Heart right ventricle (tissue), 16 donors: ENCODE measurements at regions of chr18 and their contacts with region 1.

Region 1: DNA sequence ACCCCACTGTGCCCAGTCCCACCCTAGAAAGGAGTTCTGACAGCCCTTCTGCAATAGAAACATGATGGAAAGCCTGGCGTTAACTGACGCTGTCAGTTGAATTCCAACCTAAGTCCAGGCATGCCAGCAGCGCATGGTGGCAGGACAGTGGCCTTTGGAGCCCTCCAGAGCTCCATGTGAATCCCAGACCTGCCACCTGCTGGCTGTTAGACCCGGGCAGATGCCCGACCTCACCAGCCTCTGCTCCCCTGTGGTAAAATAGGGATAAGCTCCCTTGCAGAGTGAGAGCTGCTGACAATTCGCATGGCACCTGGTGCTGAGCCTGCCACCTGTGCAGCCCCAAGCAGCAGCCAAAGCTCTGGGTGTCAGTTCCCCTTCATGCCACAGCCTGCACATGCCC is 138.6 kb downstream of the LOXHD1 start:
- DNase-seq: peak; percentile 34 to 45
- ATAC-seq: peak; percentile 77 to 93 (median 86)
- H3K4me3 ChIP-seq: no peak overlapping the region
- H3K27ac ChIP-seq: no peak overlapping the region
- H3K4me1 ChIP-seq: no peaks in the 10 kb centered on the region
- H3K27me3 ChIP-seq: no peaks in the 10 kb centered on the region
- CTCF ChIP-seq: peak; percentile 28 to 63 (median 54)

Region 2: GRCh38 chr18:46155641-46156051 is 362.8 kb before region 1 on chr18:
- intact Hi-C with region 1: loop called in 1 of 10 experiments (anchors 10 kb)
- DNase-seq: no peak
- ATAC-seq: no peak
- H3K4me3 ChIP-seq: no peak overlapping the region
- H3K27ac ChIP-seq: peak overlapping the region in 1 of 10 donors; percentile 41
- H3K4me1 ChIP-seq: peaks cover 0 to 18% (median 0%) of the 10 kb centered on the region in 9 donors
- H3K27me3 ChIP-seq: no peaks in the 10 kb centered on the region
- CTCF ChIP-seq: no peak

Region 3: GRCh38 chr18:46393230-46393629 is 125.2 kb before region 1 on chr18:
- intact Hi-C with region 1: loop called in 1 of 10 experiments (anchors 5 kb)
- DNase-seq: no peak
- ATAC-seq: no peak
- H3K4me3 ChIP-seq: no peak overlapping the region
- H3K27ac ChIP-seq: no peak overlapping the region
- H3K4me1 ChIP-seq: peaks cover 0 to 9% (median 2%) of the 10 kb centered on the region in 9 donors
- H3K27me3 ChIP-seq: no peaks in the 10 kb centered on the region
- CTCF ChIP-seq: peak in 3 of 9 donors; percentile 8 to 18 (median 18)

Region 4: DNA sequence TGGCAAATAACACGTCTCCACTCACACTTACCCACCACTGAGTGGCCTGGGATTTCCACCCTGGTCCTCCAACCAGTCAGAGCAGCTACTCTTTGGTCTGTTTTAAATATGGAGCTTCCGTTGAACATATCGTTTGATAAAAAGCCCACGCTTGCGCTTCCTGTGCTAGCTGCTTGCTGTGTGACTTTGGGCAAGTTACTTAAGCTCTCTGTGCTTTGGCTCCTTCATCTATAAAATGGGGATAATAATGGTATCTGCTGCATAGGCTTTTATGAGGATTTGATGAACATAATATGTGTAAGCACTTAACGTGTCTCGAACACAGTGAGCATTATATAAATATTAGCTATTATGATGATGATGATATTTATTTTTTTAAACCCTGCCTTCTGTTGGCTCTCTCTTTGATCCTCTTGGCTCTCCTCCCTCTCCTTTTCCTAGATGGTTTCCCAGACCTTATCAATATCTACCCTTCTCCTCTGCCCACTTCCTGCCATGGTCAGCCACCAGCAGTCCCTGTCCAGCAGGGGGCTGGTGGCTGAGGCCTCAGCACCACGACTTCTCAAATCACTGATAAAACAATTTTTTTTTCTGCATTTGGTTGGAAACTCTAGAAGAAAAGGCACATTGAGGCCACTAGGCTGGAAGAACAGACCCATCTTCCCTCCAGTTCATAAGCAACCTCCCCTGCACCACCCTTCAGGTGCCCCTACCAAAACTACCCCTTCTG is 53.3 kb before region 1 on chr18:
- intact Hi-C with region 1: no loop called
- DNase-seq: no peak
- ATAC-seq: no peak
- H3K4me3 ChIP-seq: no peak overlapping the region
- H3K27ac ChIP-seq: no peak overlapping the region
- H3K4me1 ChIP-seq: peaks cover 0 to 8% (median 0%) of the 10 kb centered on the region in 9 donors
- H3K27me3 ChIP-seq: no peaks in the 10 kb centered on the region
- CTCF ChIP-seq: peak in 2 of 9 donors; percentile 7 to 14

Region 5: DNA sequence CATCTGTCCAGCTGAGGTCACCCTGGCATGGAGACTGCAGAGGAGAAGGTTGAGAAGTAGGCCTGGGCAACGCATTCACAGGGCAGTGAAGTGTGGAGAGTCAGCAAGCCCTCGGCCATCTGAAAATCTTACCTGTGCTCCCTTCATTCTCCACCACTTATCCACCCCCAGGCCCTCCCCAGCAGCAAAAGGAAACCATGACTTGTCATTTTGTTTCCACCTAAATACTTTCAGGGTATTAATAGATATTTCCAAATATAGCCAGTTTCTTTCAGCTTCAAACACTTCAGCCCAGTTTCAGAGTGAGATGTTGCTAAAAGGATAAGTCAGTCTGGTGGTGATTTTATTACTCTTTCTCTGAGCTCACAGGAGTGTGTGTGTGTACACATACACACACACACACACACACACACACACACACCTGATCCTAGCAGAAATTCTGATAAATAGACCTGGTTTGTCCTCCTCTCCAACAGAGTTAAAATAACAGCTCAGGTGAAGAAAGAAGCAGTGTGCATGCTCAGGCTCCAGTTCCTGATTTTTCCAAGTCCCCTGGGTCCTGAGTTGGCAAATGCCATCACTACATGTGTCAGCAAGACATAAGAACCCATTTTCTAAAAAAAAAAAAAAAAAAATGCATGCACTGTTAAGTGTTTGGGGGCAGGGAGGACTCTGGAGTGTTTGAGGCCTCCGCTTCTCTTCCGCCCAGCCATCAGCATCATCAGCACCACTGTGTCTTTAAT is 55.7 kb after region 1 on chr18:
- intact Hi-C with region 1: no loop called
- DNase-seq: no peak
- ATAC-seq: no peak
- H3K4me3 ChIP-seq: no peak overlapping the region
- H3K27ac ChIP-seq: no peak overlapping the region
- H3K4me1 ChIP-seq: no peaks in the 10 kb centered on the region
- H3K27me3 ChIP-seq: peaks cover 0 to 2% (median 0%) of the 10 kb centered on the region in 7 donors
- CTCF ChIP-seq: no peak

Region 6: DNA sequence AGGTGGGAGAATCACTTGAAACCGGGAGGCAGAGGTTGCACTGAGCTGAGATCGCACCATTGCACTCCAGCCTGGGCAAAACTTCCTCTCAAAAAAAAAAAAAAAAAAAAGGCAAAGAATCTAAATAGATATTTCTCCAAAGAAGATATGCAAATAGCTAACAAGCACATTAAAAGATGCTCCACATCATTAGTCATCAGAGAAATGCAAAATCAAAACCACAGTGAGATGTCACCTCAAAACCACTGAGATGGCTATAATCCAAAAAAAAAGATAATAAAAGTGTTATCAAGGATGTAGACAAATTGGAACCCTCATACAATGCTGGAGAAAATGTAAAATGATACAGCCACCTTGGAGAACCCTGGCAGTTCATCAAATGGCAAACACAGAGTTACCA is 230.0 kb after region 1 on chr18:
- intact Hi-C with region 1: no loop called
- DNase-seq: no peak
- ATAC-seq: no peak
- H3K4me3 ChIP-seq: no peak overlapping the region
- H3K27ac ChIP-seq: no peak overlapping the region
- H3K4me1 ChIP-seq: no peaks in the 10 kb centered on the region
- H3K27me3 ChIP-seq: peaks cover 0 to 4% (median 0%) of the 10 kb centered on the region in 7 donors
- CTCF ChIP-seq: no peak